ENCODE measurements at regions of chr3 and their contacts with region 1.

Region 1: GRCh38 chr3:123723522-123724168 is 138.8 kb upstream of the HACD2 start:
- DNase-seq: peak; percentile 51 to 76
- H3K4me3 ChIP-seq: no peak overlapping the region
- H3K27ac ChIP-seq: no peak overlapping the region
- H3K4me1 ChIP-seq: peaks cover 0 to 3% (median 0%) of the 10 kb centered on the region in 4 experiments; a peak in 1 of 7 replicates
- H3K27me3 ChIP-seq: no peaks in the 10 kb centered on the region
- CTCF ChIP-seq: peak; percentile 54 to 93 (median 83)
- EP300 ChIP-seq: no peak
- POLR2A ChIP-seq: no peak; a peak in 1 of 3 replicates
- RAD21 ChIP-seq: peak; percentile 58 to 72

Region 2: DNA sequence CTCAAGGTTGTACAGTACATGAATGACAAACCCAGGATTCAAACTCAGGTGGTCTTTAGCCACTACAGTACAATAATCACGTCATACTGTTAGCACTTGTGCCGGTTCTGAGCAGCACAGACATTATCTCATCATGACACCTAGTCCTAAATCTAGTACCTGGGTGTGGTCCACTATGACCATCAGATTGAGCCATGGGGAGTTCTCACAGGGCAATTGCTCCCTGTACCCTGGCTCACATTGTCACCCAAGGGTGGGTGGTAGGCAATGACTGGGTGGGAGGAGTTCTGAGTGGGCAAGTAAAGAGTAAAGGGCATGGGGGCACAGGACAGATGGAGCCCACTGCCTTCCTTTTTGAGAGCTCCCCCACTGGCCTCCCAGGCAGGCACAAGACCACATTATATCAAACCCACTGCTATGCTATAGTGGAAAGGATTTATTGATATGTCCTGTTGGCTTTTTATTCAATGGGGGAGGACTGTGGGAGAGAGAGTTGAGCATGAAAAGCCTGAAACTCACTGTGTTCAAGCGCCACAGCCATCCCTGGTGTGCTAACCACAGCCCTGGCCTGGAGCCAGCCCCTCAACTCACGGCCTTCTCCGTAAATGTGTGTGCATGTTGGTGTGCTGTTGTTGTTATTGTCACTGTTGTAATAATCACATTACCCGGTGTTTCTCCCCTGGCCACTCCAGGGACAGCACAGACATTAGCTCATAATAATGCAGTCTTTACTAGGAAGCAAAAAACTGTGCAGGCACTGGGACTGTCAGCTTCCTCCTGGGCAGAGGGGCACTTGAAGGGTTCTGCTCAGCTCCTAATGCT is 302.1 kb before region 1 on chr3:
- CTCF ChIA-PET with region 1: no interaction called
- POLR2A ChIA-PET with region 1: no interaction called
- DNase-seq: no peak
- H3K4me3 ChIP-seq: no peak overlapping the region
- H3K27ac ChIP-seq: no peak overlapping the region
- H3K4me1 ChIP-seq: no peaks in the 10 kb centered on the region; a peak in 2 of 7 replicates
- H3K27me3 ChIP-seq: no peaks in the 10 kb centered on the region
- CTCF ChIP-seq: no peak
- EP300 ChIP-seq: no peak
- POLR2A ChIP-seq: no peak
- RAD21 ChIP-seq: no peak

Region 3: GRCh38 chr3:123499322-123499721 is 224.3 kb before region 1 on chr3:
- CTCF ChIA-PET with region 1: no interaction called
- POLR2A ChIA-PET with region 1: no interaction called
- DNase-seq: no peak
- H3K4me3 ChIP-seq: no peak overlapping the region
- H3K27ac ChIP-seq: no peak overlapping the region
- H3K4me1 ChIP-seq: no peaks in the 10 kb centered on the region
- H3K27me3 ChIP-seq: no peaks in the 10 kb centered on the region; a peak in 2 of 7 replicates
- CTCF ChIP-seq: no peak
- EP300 ChIP-seq: no peak
- POLR2A ChIP-seq: no peak
- RAD21 ChIP-seq: no peak

Region 4: GRCh38 chr3:123642182-123642956 is 81.3 kb before region 1 on chr3:
- CTCF ChIA-PET with region 1: interaction called, 1,463 read pairs
- POLR2A ChIA-PET with region 1: no interaction called
- DNase-seq: peak; percentile 89 to 93
- H3K4me3 ChIP-seq: no peak overlapping the region
- H3K27ac ChIP-seq: no peak overlapping the region
- H3K4me1 ChIP-seq: peaks cover 0 to 6% (median 2%) of the 10 kb centered on the region in 4 experiments; a peak in 4 of 7 replicates
- H3K27me3 ChIP-seq: no peaks in the 10 kb centered on the region
- CTCF ChIP-seq: peak; percentile 62 to 98 (median 97)
- EP300 ChIP-seq: 0 out of 3 replicates have a peak, but pooled peaks of 1 of the 2 experiments have one; percentile 35
- POLR2A ChIP-seq: no peak
- RAD21 ChIP-seq: peak; percentile 76 to 79

Region 5: GRCh38 chr3:123664753-123665152 is 58.9 kb before region 1 on chr3:
- CTCF ChIA-PET with region 1: interaction called, 1,463 read pairs
- POLR2A ChIA-PET with region 1: no interaction called
- DNase-seq: no peak
- H3K4me3 ChIP-seq: no peak overlapping the region
- H3K27ac ChIP-seq: no peak overlapping the region
- H3K4me1 ChIP-seq: no peaks in the 10 kb centered on the region
- H3K27me3 ChIP-seq: no peaks in the 10 kb centered on the region
- CTCF ChIP-seq: no peak
- EP300 ChIP-seq: no peak
- POLR2A ChIP-seq: no peak
- RAD21 ChIP-seq: no peak

Region 6: DNA sequence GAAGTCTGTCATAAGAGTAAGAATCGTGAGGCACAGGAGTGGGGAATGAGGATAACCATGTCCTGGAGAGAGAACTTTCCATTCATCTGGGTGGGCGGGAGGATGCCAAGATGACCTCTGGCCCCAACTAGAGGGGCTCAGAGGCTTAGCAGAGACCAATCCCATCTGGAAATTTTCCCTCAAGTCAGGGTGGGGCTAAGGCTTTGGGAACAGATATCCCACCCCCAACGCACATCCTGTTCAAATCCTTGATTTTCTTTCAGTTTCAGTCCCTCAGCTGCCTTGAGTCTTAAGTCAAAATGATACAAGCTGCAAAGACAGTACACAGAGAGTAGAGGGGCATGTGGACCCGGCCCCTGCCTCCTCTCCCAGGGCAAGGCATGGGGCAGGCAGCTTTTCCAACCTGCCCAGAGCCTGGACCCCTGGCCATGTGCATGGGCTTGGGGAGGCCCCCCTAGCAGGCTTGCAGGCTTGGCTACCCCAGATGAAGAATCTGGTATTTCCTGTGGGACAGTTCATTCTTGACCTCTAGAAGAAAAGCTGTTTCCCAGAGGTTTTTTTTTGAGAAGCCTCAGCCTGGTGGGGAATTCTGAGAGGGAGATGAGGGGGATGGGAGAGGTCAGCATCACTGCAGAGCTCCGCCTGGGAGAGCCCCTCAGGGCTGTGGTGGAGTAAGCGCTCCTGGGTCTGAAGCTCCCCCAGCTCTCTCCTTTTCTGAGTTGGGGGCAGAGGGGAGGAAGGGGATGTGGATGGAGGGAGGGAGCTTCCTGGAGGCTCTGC is 29.1 kb before region 1 on chr3:
- CTCF ChIA-PET with region 1: interaction called, 36 read pairs
- POLR2A ChIA-PET with region 1: no interaction called
- DNase-seq: no peak
- H3K4me3 ChIP-seq: no peak overlapping the region
- H3K27ac ChIP-seq: no peak overlapping the region
- H3K4me1 ChIP-seq: peaks cover 0 to 7% (median 2%) of the 10 kb centered on the region in 4 experiments; a peak in 3 of 7 replicates
- H3K27me3 ChIP-seq: no peaks in the 10 kb centered on the region; a peak in 1 of 7 replicates
- CTCF ChIP-seq: no peak
- EP300 ChIP-seq: no peak
- POLR2A ChIP-seq: no peak
- RAD21 ChIP-seq: no peak

Region 7: GRCh38 chr3:123712077-123712860 is 11.4 kb before region 1 on chr3:
- CTCF ChIA-PET with region 1: interaction called, 34 read pairs
- POLR2A ChIA-PET with region 1: interaction called, 3 read pairs
- DNase-seq: no peak
- H3K4me3 ChIP-seq: no peak overlapping the region
- H3K27ac ChIP-seq: no peak overlapping the region
- H3K4me1 ChIP-seq: peaks cover 0 to 3% (median 2%) of the 10 kb centered on the region in 4 experiments; a peak in 2 of 7 replicates
- H3K27me3 ChIP-seq: no peaks in the 10 kb centered on the region
- CTCF ChIP-seq: no peak
- EP300 ChIP-seq: no peak
- POLR2A ChIP-seq: no peak
- RAD21 ChIP-seq: no peak

Region 8: GRCh38 chr3:123750659-123751420 is 27.2 kb after region 1 on chr3:
- CTCF ChIA-PET with region 1: interaction called, 25 read pairs
- POLR2A ChIA-PET with region 1: interaction called, 3 read pairs
- DNase-seq: peak in 1 of 2 experiments; percentile 45
- H3K4me3 ChIP-seq: no peak overlapping the region
- H3K27ac ChIP-seq: no peak overlapping the region
- H3K4me1 ChIP-seq: 0 out of 7 replicates have a peak, but pooled peaks cover 0 to 3% (median 0%) of the 10 kb centered on the region in 4 experiments
- H3K27me3 ChIP-seq: no peaks in the 10 kb centered on the region
- CTCF ChIP-seq: no peak
- EP300 ChIP-seq: no peak
- POLR2A ChIP-seq: no peak
- RAD21 ChIP-seq: no peak; a peak in 1 of 4 replicates

Region 9: DNA sequence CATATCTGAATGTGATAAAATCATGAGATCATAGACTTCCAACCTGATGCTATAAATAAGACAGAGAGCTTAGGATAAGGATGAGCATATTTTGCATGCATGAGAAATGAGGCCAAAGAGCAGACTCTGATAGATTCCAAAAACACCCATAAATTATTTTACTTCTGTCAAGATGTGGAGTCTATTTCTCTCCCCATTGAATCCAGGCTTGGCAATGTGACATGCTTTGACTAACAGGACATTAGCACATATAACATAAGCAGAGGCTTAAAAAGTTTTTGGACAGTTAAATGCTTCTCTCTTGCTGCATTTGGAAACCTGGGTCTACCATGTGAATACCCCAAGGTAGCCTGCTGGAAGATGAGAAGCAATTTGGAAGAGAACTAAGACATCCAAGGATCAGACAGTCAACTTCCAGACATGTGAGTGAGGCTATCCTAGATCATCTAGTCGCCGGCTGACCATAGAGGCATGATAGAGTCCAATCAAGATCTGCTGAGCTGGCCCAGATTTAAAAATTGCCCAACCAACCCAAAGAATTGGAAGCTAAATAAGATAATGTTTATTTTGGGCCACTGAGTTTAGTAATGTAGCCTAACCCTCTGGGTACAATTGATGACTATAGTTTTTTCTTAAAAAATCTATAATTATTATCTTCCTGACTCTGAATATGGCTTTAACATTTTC is 130.2 kb after region 1 on chr3:
- CTCF ChIA-PET with region 1: no interaction called
- POLR2A ChIA-PET with region 1: no interaction called
- DNase-seq: no peak
- H3K4me3 ChIP-seq: no peak overlapping the region
- H3K27ac ChIP-seq: no peak overlapping the region
- H3K4me1 ChIP-seq: no peaks in the 10 kb centered on the region
- H3K27me3 ChIP-seq: no peaks in the 10 kb centered on the region
- CTCF ChIP-seq: no peak
- EP300 ChIP-seq: no peak
- POLR2A ChIP-seq: no peak
- RAD21 ChIP-seq: no peak